K562 (cell line): ENCODE measurements at regions of chr3 and their contacts with region 1.

Region 1: GRCh38 chr3:25648107-25648535 is 16.6 kb downstream of the TOP2B start:
- DNase-seq: peak; percentile 69 to 87 (median 75)
- ATAC-seq: peak; percentile 97
- H3K4me3 ChIP-seq: no peak overlapping the region
- H3K27ac ChIP-seq: no peak overlapping the region
- H3K4me1 ChIP-seq: no peaks in the 10 kb centered on the region
- H3K27me3 ChIP-seq: no peaks in the 10 kb centered on the region
- CTCF ChIP-seq: peak; percentile 95 to 98 (median 96)
- EP300 ChIP-seq: no peak
- POLR2A ChIP-seq: no peak
- RAD21 ChIP-seq: peak; percentile 80 to 95

Region 2: GRCh38 chr3:25664810-25665314 is 16.7 kb after region 1 on chr3 and contains the start of gene TOP2B:
- CTCF ChIA-PET with region 1: interaction called, 3 read pairs
- POLR2A ChIA-PET with region 1: interaction called, 11 read pairs
- in situ Hi-C with region 1: no loop called
- intact Hi-C with region 1: no loop called
- DNase-seq: peak; percentile 98 to 99 (median 99)
- ATAC-seq: peak; percentile 95
- H3K4me3 ChIP-seq: peak within 1 kb of the TSS; percentile 75
- H3K27ac ChIP-seq: peak within 1 kb of the TSS; percentile 93
- H3K4me1 ChIP-seq: peaks cover 9 to 20% of the 10 kb centered on the region in 2 experiments
- H3K27me3 ChIP-seq: no peaks in the 10 kb centered on the region
- CTCF ChIP-seq: no peak
- EP300 ChIP-seq: peak; percentile 4; the same call in 1 of the 2 replicates
- POLR2A ChIP-seq: peak; percentile 94
- RAD21 ChIP-seq: no peak
- polyA plus RNA-seq, gene TOP2B: 45.3 to 57.8 TPM

Region 3: GRCh38 chr3:25678581-25678980 is 30.5 kb after region 1 on chr3:
- CTCF ChIA-PET with region 1: no interaction called
- POLR2A ChIA-PET with region 1: no interaction called
- in situ Hi-C with region 1: no loop called
- intact Hi-C with region 1: no loop called
- DNase-seq: no peak
- ATAC-seq: no peak
- H3K4me3 ChIP-seq: no peak overlapping the region
- H3K27ac ChIP-seq: no peak overlapping the region
- H3K4me1 ChIP-seq: peaks cover 2 to 5% of the 10 kb centered on the region in 2 experiments; a peak in 1 of 5 replicates
- H3K27me3 ChIP-seq: peaks cover 0 to 12% of the 10 kb centered on the region in 2 experiments; a peak in 2 of 5 replicates
- CTCF ChIP-seq: no peak
- EP300 ChIP-seq: no peak
- POLR2A ChIP-seq: no peak
- RAD21 ChIP-seq: no peak

Region 4: GRCh38 chr3:25789596-25790556 is 141.8 kb after region 1 on chr3 and contains the start of gene OXSM:
- CTCF ChIA-PET with region 1: no interaction called
- POLR2A ChIA-PET with region 1: interaction called, 3 read pairs
- in situ Hi-C with region 1: no loop called
- intact Hi-C with region 1: loop called (anchors 2 kb)
- DNase-seq: peak; percentile 91 to 99 (median 94)
- ATAC-seq: peak; percentile 91
- H3K4me3 ChIP-seq: peak within 1 kb of the TSS; percentile 54
- H3K27ac ChIP-seq: peak within 1 kb of the TSS; percentile 90
- H3K4me1 ChIP-seq: peaks cover 0 to 35% of the 10 kb centered on the region in 2 experiments; a peak in 2 of 5 replicates
- H3K27me3 ChIP-seq: no peaks in the 10 kb centered on the region
- CTCF ChIP-seq: peak in 1 of 3 experiments; percentile 24; a peak in 1 of 6 replicates
- EP300 ChIP-seq: peak; percentile 67; the same call in 1 of the 2 replicates
- POLR2A ChIP-seq: peak; percentile 97
- RAD21 ChIP-seq: no peak
- polyA plus RNA-seq, gene OXSM: 97.9 to 107 TPM

Region 5: DNA sequence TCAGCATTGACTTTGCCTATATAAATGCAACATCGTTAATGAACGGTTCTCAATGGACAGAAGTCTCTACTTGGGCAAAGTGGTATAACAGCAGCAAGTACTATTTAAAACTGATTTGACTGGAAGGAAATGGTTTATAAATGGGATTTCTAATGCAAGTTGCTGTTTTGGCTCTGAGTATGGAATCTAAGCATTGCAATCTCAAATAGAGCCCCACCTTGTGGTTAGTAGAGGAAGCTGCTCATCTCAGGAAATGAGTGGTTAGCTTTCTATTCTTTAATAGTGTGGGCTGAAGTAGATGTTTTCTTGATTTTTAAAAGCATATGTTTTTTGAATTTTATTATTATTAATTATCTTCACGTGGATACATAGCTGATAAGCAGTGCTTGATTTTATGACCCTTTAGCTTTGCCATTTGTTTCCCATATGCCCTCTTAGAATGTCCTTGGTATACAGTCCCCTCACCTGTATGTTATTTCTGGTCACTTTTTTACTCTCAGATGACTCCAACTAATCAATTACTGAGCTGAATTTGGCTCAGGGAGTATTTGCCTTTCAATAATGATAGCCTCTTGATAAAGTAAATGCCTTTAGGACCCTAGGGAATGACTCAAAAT is 208.9 kb after region 1 on chr3:
- CTCF ChIA-PET with region 1: interaction called, 12 read pairs
- POLR2A ChIA-PET with region 1: no interaction called
- in situ Hi-C with region 1: loop called (anchors 10 kb)
- intact Hi-C with region 1: loop called (anchors 1 kb)
- DNase-seq: peak; percentile 51 to 62 (median 58)
- ATAC-seq: peak; percentile 93
- H3K4me3 ChIP-seq: no peak overlapping the region
- H3K27ac ChIP-seq: no peak overlapping the region
- H3K4me1 ChIP-seq: no peaks in the 10 kb centered on the region
- H3K27me3 ChIP-seq: no peaks in the 10 kb centered on the region
- CTCF ChIP-seq: peak; percentile 62 to 83 (median 76); a peak in 5 of 6 replicates
- EP300 ChIP-seq: no peak
- POLR2A ChIP-seq: no peak
- RAD21 ChIP-seq: peak; percentile 55 to 83

Region 6: DNA sequence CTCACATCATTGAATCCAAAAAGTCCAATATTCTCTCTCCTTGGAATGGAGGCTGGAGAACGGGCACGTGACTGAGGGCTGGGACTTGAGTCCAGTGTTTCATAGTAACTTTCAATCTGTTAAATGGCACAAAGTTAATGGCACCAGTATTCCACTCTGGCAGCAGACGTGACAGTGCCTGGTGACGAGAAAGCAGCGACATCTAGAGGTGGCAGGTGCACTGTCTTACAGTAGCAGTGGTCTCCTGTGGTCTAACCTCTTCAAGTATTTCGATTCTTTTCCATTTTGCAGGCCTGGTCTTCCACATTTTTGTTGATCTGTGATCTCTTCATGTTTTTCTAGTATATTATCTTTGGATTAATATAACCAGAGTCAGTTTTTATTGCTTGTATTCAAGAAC is 248.9 kb after region 1 on chr3:
- CTCF ChIA-PET with region 1: interaction called, 10 read pairs
- POLR2A ChIA-PET with region 1: no interaction called
- in situ Hi-C with region 1: no loop called
- intact Hi-C with region 1: loop called (anchors 1 kb)
- DNase-seq: peak; percentile 52 to 72 (median 62)
- ATAC-seq: peak; percentile 95
- H3K4me3 ChIP-seq: no peak overlapping the region
- H3K27ac ChIP-seq: no peak overlapping the region
- H3K4me1 ChIP-seq: peaks cover 0 to 6% of the 10 kb centered on the region in 2 experiments; a peak in 2 of 5 replicates
- H3K27me3 ChIP-seq: no peaks in the 10 kb centered on the region
- CTCF ChIP-seq: peak; percentile 79 to 89 (median 80)
- EP300 ChIP-seq: no peak
- POLR2A ChIP-seq: no peak
- RAD21 ChIP-seq: peak; percentile 56 to 74

Region 7: DNA sequence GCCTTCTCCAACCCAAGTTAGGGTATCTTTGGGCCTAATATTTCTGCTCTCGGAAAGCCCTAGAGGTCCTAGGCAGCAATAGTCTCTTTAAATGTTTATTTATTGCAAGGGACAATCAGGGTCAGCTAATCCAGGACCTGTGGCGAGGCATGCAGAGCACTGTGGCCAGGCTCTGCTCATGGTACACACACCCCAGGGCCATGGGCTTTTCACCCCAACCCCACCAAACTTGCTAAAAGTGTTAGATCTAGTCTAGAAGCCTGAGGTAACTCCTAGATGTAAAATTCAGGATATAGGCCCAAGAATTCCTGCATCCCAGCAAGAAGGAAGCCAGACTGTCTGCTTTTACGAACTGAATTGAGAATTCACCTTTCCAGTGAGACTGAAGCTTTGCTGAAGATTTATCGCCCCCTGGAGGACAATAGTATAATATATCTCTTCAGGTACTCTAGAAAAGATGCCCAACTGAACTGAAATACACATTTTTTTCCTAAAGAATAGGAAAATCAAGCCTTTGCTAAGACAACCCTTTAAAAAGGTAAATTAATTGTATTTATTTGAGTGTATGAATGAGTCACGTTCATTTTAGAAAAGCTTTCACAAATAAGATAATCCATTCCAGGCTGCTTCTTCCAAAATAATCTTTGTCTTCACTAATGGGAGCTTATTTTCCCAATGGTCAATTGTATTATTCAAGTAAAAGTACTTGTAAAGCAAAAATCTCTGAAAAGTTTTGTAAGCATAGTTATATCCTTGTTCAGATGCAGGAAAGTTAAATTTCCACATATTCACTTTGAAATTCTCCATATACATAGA is 1064.3 kb after region 1 on chr3:
- CTCF ChIA-PET with region 1: interaction called, 3 read pairs
- POLR2A ChIA-PET with region 1: no interaction called
- in situ Hi-C with region 1: no loop called
- intact Hi-C with region 1: loop called (anchors 2 kb)
- DNase-seq: peak; percentile 25 to 50 (median 42)
- ATAC-seq: peak; percentile 63; the same call in 1 of the 3 replicates
- H3K4me3 ChIP-seq: no peak overlapping the region
- H3K27ac ChIP-seq: no peak overlapping the region
- H3K4me1 ChIP-seq: no peaks in the 10 kb centered on the region
- H3K27me3 ChIP-seq: no peaks in the 10 kb centered on the region
- CTCF ChIP-seq: peak; percentile 27 to 48 (median 48); a peak in 5 of 6 replicates
- EP300 ChIP-seq: no peak
- POLR2A ChIP-seq: no peak
- RAD21 ChIP-seq: peak; percentile 57 to 70